ENCODE measurements at regions of chr10 and their contacts with region 1.

Region 1: GRCh38 chr10:102678842-102679289 is 34.6 kb downstream of the TRIM8 start:
- DNase-seq: peak; percentile 73
- CTCF ChIP-seq: peak; percentile 77

Region 2: GRCh38 chr10:102231357-102232318 is 447.2 kb before region 1 on chr10:
- CTCF ChIA-PET with region 1: no interaction called
- POLR2A ChIA-PET with region 1: no interaction called
- DNase-seq: peak; percentile 81
- CTCF ChIP-seq: peak; percentile 80

Region 3: GRCh38 chr10:102660888-102661657 is 17.8 kb before region 1 on chr10:
- CTCF ChIA-PET with region 1: interaction called, 84 read pairs
- POLR2A ChIA-PET with region 1: interaction called, 6 read pairs
- DNase-seq: peak; percentile 90
- CTCF ChIP-seq: no peak

Region 4: DNA sequence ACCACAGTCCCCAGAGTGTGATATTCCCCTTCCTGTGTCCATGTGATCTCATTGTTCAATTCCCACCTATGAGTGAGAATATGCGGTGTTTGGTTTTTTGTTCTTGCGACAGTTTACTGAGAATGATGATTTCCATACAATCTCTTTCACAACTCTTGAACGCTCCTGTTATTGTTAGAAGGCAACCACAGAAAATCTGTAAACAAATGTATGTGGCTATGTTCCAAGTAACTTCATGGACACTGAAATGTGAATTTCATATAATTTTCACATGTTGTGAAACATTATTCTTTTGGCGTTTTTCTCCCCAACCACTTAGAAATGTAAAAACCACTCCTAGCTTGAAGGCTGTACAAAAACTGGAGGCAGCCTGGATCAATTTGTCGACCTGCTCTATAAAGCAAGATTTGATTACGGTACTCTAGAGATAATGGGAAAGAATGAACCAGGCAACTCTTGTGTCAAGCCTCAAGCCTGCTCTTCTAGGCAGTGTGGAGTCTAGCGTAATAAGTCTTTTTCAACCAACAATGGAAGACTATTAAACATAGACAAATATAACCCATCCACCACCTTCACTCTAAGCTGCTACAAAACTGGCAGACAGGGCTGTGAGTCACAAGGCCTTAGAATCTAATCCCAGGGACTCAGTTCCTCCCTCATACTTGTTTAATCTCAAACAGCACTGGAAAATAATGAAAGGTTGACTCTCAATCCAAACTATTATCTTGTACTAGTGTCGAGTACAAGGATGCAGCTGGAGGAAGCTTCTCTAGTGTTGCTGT is 12.6 kb after region 1 on chr10:
- CTCF ChIA-PET with region 1: interaction called, 43 read pairs
- POLR2A ChIA-PET with region 1: no interaction called
- DNase-seq: no peak
- CTCF ChIP-seq: no peak

Region 5: DNA sequence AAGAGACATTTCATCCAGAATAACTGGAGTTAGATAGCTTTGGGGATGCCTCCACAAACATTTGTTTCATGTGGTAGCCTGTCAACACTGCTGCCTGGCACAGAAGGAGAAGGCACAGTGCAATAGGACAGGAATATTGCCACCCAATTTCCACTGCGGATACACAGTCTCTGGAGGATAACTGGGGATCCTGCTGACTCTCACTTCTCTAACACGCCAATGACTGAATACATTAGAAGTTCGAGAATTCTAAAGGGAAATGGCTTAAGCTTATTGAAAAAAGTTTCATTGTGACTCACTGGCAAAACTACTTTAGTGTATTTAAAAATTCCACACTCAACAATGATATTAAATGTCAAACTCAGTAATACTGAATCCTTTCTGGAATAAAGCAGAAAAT is 22.4 kb after region 1 on chr10:
- CTCF ChIA-PET with region 1: interaction called, 18 read pairs
- POLR2A ChIA-PET with region 1: no interaction called
- DNase-seq: no peak
- CTCF ChIP-seq: no peak

Region 6: GRCh38 chr10:102713814-102714620 is 35.2 kb after region 1 on chr10 and contains the start of gene ARL3:
- CTCF ChIA-PET with region 1: interaction called, 41 read pairs
- POLR2A ChIA-PET with region 1: no interaction called
- DNase-seq: peak; percentile 98
- CTCF ChIP-seq: no peak

Region 7: DNA sequence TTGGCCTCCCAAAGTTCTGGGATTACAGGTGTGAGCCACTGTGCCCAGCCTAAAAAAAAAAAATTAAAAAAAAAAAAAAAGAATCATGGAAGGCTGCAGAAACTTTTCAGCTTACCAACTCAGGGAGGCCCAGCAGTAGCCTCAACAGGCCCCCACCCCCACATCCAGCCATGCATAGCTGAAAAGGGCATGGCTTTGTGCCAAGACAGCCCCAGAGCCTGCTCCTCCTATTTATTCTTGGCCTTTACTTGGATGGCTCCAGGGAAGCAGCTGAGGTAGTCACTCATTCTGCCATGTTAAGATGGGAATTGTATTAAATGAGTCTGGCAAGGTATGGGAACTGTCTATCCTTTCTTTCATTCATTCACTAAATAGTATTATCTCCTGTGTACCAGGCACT is 225.5 kb after region 1 on chr10:
- CTCF ChIA-PET with region 1: interaction called, 16 read pairs
- POLR2A ChIA-PET with region 1: interaction called, 11 read pairs
- DNase-seq: no peak
- CTCF ChIP-seq: no peak